ENCODE measurements at regions of chr1 and their contacts with region 1.

Region 1: GRCh38 chr1:100955322-100955721 is 59.4 kb downstream of the SLC30A7 start:
- DNase-seq: no peak
- H3K4me3 Mint-ChIP-seq: no peak overlapping the region
- H3K27ac Mint-ChIP-seq: peak overlapping the region; percentile 65
- H3K4me1 Mint-ChIP-seq: peaks cover 62% of the 10 kb centered on the region
- H3K27me3 Mint-ChIP-seq: no peaks in the 10 kb centered on the region

Region 2: GRCh38 chr1:100443811-100444571 is 511.3 kb before region 1 on chr1:
- CTCF ChIA-PET with region 1: no interaction called
- intact Hi-C with region 1: loop called (anchors 5 kb)
- DNase-seq: peak; percentile 53
- H3K4me3 Mint-ChIP-seq: peak overlapping the region; percentile 72
- H3K27ac Mint-ChIP-seq: peak overlapping the region; percentile 96
- H3K4me1 Mint-ChIP-seq: peaks cover 85% of the 10 kb centered on the region
- H3K27me3 Mint-ChIP-seq: no peaks in the 10 kb centered on the region

Region 3: GRCh38 chr1:100904528-100904927 is 50.8 kb before region 1 on chr1:
- CTCF ChIA-PET with region 1: interaction called, 12 read pairs
- intact Hi-C with region 1: no loop called
- DNase-seq: no peak
- H3K4me3 Mint-ChIP-seq: no peak overlapping the region
- H3K27ac Mint-ChIP-seq: no peak overlapping the region
- H3K4me1 Mint-ChIP-seq: peaks cover 64% of the 10 kb centered on the region
- H3K27me3 Mint-ChIP-seq: no peaks in the 10 kb centered on the region

Region 4: GRCh38 chr1:100941098-100941527 is 14.2 kb before region 1 on chr1:
- CTCF ChIA-PET with region 1: interaction called, 3 read pairs
- intact Hi-C with region 1: loop called (anchors 1 kb)
- DNase-seq: peak; percentile 58
- H3K4me3 Mint-ChIP-seq: peak overlapping the region; percentile 58
- H3K27ac Mint-ChIP-seq: peak overlapping the region; percentile 92
- H3K4me1 Mint-ChIP-seq: peaks cover 48% of the 10 kb centered on the region
- H3K27me3 Mint-ChIP-seq: peaks cover 2% of the 10 kb centered on the region

Region 5: GRCh38 chr1:101025657-101026504 is 70.6 kb after region 1 on chr1 and contains the start of gene DPH5:
- CTCF ChIA-PET with region 1: no interaction called
- intact Hi-C with region 1: loop called (anchors 1 kb)
- DNase-seq: peak; percentile 92
- H3K4me3 Mint-ChIP-seq: peak within 1 kb of the TSS; percentile 99
- H3K27ac Mint-ChIP-seq: peak within 1 kb of the TSS; percentile 98
- H3K4me1 Mint-ChIP-seq: peaks cover 58% of the 10 kb centered on the region
- H3K27me3 Mint-ChIP-seq: no peaks in the 10 kb centered on the region
- total RNA-seq, gene DPH5: 61.7 to 66.3 TPM

Region 6: GRCh38 chr1:101198842-101199636 is 243.7 kb after region 1 on chr1:
- CTCF ChIA-PET with region 1: no interaction called
- intact Hi-C with region 1: loop called (anchors 1 kb)
- DNase-seq: peak; percentile 82
- H3K4me3 Mint-ChIP-seq: no peak overlapping the region
- H3K27ac Mint-ChIP-seq: peak overlapping the region; percentile 79
- H3K4me1 Mint-ChIP-seq: peaks cover 28% of the 10 kb centered on the region
- H3K27me3 Mint-ChIP-seq: no peaks in the 10 kb centered on the region